ENCODE measurements at regions of chr1 and their contacts with region 1.

Region 1: GRCh38 chr1:119948342-119949214 is 52.3 kb upstream of the ADAM30 start:
- DNase-seq: peak; percentile 50
- H3K4me3 ChIP-seq: no peak overlapping the region
- H3K27ac ChIP-seq: peak overlapping the region; percentile 40
- H3K27me3 ChIP-seq: no peaks in the 10 kb centered on the region
- CTCF ChIP-seq: peak; percentile 96

Region 2: DNA sequence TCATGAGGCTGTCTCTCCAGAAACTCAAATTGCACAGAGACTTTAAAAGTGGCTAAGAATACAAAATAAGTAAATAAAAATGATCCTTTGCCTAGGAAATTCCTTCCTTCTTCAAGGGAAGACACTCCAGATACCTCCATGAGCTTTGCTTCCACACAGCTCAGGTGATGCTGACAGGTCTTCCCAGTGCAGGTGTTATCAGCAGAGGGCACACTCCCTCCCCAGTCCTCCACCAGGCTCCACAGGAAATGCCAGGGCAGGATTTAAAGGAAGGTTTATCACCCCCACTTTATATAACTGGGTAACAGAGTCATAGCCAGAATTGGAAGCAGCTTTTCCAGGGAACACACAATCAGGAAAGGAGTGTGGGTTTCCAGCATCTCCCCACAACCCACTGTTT is 527.9 kb before region 1 on chr1:
- CTCF ChIA-PET with region 1: no interaction called
- POLR2A ChIA-PET with region 1: no interaction called
- DNase-seq: no peak
- H3K4me3 ChIP-seq: no peak overlapping the region
- H3K27ac ChIP-seq: no peak overlapping the region
- H3K27me3 ChIP-seq: no peaks in the 10 kb centered on the region
- CTCF ChIP-seq: no peak

Region 3: GRCh38 chr1:119853155-119853554 is 95.4 kb before region 1 on chr1:
- CTCF ChIA-PET with region 1: no interaction called
- POLR2A ChIA-PET with region 1: no interaction called
- DNase-seq: no peak
- H3K4me3 ChIP-seq: no peak overlapping the region
- H3K27ac ChIP-seq: no peak overlapping the region
- H3K27me3 ChIP-seq: peaks cover 3% of the 10 kb centered on the region
- CTCF ChIP-seq: no peak

Region 4: GRCh38 chr1:119895986-119896702 is 52.4 kb before region 1 on chr1 and contains the start of gene ADAM30:
- CTCF ChIA-PET with region 1: no interaction called
- POLR2A ChIA-PET with region 1: no interaction called
- DNase-seq: no peak
- H3K4me3 ChIP-seq: no peak within 1 kb of the TSS
- H3K27ac ChIP-seq: no peak within 1 kb of the TSS
- H3K27me3 ChIP-seq: peaks cover 4% of the 10 kb centered on the region
- CTCF ChIP-seq: no peak
- polyA plus RNA-seq, gene ADAM30: not detected in 2 replicates

Region 5: GRCh38 chr1:119935373-119935772 is 13.2 kb before region 1 on chr1:
- CTCF ChIA-PET with region 1: interaction called, 10 read pairs
- POLR2A ChIA-PET with region 1: no interaction called
- DNase-seq: no peak
- H3K4me3 ChIP-seq: no peak overlapping the region
- H3K27ac ChIP-seq: no peak overlapping the region
- H3K27me3 ChIP-seq: no peaks in the 10 kb centered on the region
- CTCF ChIP-seq: no peak

Region 6: DNA sequence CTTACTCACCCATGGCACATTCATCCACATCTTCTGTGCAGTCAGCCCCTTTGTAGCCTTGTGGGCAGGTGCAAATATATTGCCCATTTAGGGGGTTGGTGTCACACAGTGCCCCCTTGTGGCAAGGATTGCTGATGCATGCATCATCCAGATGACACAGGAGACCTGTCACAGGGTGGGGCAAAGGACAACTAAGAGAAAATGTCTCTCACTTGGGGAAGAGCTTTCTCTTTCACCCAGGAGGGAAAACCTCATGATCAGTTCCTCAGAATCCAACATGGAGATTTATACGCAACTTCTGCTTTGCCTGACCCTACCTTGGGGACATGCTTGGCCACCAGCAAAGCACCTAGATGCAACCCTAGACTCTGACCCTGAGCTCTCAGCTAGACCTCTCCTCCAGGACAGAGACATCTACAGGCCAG is 19.5 kb after region 1 on chr1:
- CTCF ChIA-PET with region 1: interaction called, 12 read pairs
- POLR2A ChIA-PET with region 1: no interaction called
- DNase-seq: no peak
- H3K4me3 ChIP-seq: no peak overlapping the region
- H3K27ac ChIP-seq: no peak overlapping the region
- H3K27me3 ChIP-seq: no peaks in the 10 kb centered on the region
- CTCF ChIP-seq: peak; percentile 64

Region 7: GRCh38 chr1:119987112-119987511 is 38.5 kb after region 1 on chr1:
- CTCF ChIA-PET with region 1: interaction called, 10 read pairs
- POLR2A ChIA-PET with region 1: no interaction called
- DNase-seq: peak; percentile 72
- H3K4me3 ChIP-seq: no peak overlapping the region
- H3K27ac ChIP-seq: peak overlapping the region; percentile 60
- H3K27me3 ChIP-seq: no peaks in the 10 kb centered on the region
- CTCF ChIP-seq: no peak

Measured in AG04450 (cell line).